Vagina (tissue), 2 donors: ENCODE measurements at regions of chr1 and their contacts with region 1.

Region 1: GRCh38 chr1:39258146-39258924 is 53.8 kb downstream of the MACF1 start:
- DNase-seq: no peak
- H3K4me3 ChIP-seq: no peak overlapping the region
- H3K27ac ChIP-seq: peak overlapping the region; percentile 68
- H3K4me1 ChIP-seq: peaks cover 33% of the 10 kb centered on the region
- H3K27me3 ChIP-seq: no peaks in the 10 kb centered on the region
- CTCF ChIP-seq: peak; percentile 48 to 90 (median 76)
- POLR2A ChIP-seq: no peak

Region 2: DNA sequence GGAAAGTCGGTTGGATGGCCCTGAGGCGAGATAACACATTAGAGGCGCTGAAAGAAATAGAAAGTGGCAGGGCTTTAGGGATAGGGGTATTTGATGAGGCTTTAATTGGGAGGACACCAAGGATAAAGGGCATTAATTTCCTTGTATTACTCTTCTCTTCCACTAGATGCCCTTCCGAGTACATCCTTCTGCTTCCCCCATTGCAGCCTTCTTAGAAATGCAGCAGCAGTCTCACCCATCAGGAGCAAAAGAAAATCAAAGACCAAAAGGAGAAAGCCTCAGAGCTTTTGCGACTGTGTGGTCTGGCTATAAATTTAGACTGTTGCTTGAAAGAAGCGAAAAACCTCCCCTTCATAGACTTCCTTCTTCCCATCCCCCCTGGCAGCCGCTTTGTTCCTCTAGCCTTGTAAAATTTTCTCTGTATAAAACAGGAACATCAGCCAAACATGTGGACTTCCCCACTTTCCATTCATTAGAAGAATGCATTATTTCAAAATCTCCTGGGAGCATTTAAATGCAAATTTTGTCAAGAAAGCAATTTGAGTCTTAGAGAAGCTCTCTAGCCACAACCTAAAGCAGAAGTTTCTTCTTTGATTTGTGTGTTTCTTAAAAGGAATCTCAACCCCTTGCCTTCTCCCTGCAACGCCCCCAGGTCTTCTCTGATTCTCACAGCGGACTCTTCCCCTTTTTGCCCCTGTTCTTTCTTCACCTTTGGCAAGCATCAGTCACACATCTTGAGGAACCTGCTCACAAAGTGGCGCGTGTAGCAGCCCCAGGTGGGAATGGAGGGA is 155.6 kb before region 1 on chr1:
- intact Hi-C with region 1: loop called (anchors 5 kb)
- DNase-seq: no peak
- H3K4me3 ChIP-seq: no peak overlapping the region
- H3K27ac ChIP-seq: peak overlapping the region; percentile 96
- H3K4me1 ChIP-seq: peaks cover 51% of the 10 kb centered on the region
- H3K27me3 ChIP-seq: no peaks in the 10 kb centered on the region
- CTCF ChIP-seq: peak; percentile 75 to 94 (median 88)
- POLR2A ChIP-seq: no peak

Region 3: DNA sequence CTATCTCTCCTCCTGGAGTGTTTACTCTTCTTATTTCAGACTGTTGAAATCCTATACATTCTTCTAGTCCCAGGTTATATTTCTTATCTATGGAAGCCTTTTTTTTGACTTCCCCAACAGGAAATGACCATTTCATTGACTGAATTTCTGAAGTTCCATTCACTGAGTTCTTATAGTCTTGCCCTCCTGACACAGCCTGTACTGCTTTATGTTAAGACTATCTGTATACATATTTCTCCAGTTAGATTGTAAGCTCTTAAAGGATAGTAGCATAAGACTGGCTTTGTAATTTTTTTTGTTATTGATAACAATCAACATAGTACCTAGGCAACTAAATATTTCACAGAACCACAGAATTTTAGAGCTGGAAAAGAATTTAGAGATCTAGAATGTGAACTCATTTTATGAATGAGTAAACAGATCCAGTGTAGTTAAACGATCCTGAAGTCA is 68.7 kb before region 1 on chr1:
- intact Hi-C with region 1: loop called (anchors 5 kb)
- DNase-seq: no peak
- H3K4me3 ChIP-seq: no peak overlapping the region
- H3K27ac ChIP-seq: peak overlapping the region; percentile 13
- H3K4me1 ChIP-seq: peaks cover 46% of the 10 kb centered on the region
- H3K27me3 ChIP-seq: no peaks in the 10 kb centered on the region
- CTCF ChIP-seq: no peak
- POLR2A ChIP-seq: no peak

Region 4: GRCh38 chr1:39204441-39205081 is 53.8 kb before region 1 on chr1 and contains the start of gene MACF1:
- intact Hi-C with region 1: loop called (anchors 2 kb)
- DNase-seq: peak in 1 of 2 donors; percentile 93
- H3K4me3 ChIP-seq: peak within 1 kb of the TSS; percentile 39 to 44
- H3K27ac ChIP-seq: peak within 1 kb of the TSS; percentile 94
- H3K4me1 ChIP-seq: peaks cover 44% of the 10 kb centered on the region
- H3K27me3 ChIP-seq: no peaks in the 10 kb centered on the region
- CTCF ChIP-seq: peak in 2 of 3 experiments; percentile 23 to 51
- POLR2A ChIP-seq: peak in 1 of 2 donors; percentile 31
- total RNA-seq, gene MACF1: 291 TPM